CD8-positive, alpha-beta T cell (primary cell): ENCODE measurements at regions of chr10 and their contacts with region 1.

Region 1: GRCh38 chr10:96532496-96532895 is 18.8 kb upstream of the TLL2 start:
- DNase-seq: no peak
- ATAC-seq: no peak
- H3K4me3 ChIP-seq: no peak overlapping the region
- H3K4me3 Mint-ChIP-seq: no peak overlapping the region
- H3K27ac ChIP-seq: no peak overlapping the region
- H3K27ac Mint-ChIP-seq: no peak overlapping the region
- H3K4me1 ChIP-seq: no peaks in the 10 kb centered on the region
- H3K4me1 Mint-ChIP-seq: peaks cover 7% of the 10 kb centered on the region
- H3K27me3 ChIP-seq: no peaks in the 10 kb centered on the region
- H3K27me3 Mint-ChIP-seq: no peaks in the 10 kb centered on the region
- CTCF ChIP-seq: no peak

Region 2: GRCh38 chr10:95741807-95742467 is 790.6 kb before region 1 on chr10:
- CTCF ChIA-PET with region 1: no interaction called
- POLR2A ChIA-PET with region 1: no interaction called
- intact Hi-C with region 1: no loop called
- DNase-seq: no peak
- ATAC-seq: no peak
- H3K4me3 ChIP-seq: no peak overlapping the region
- H3K4me3 Mint-ChIP-seq: no peak overlapping the region
- H3K27ac ChIP-seq: no peak overlapping the region
- H3K27ac Mint-ChIP-seq: no peak overlapping the region
- H3K4me1 ChIP-seq: no peaks in the 10 kb centered on the region
- H3K4me1 Mint-ChIP-seq: no peaks in the 10 kb centered on the region
- H3K27me3 ChIP-seq: no peaks in the 10 kb centered on the region
- H3K27me3 Mint-ChIP-seq: peaks cover 14% of the 10 kb centered on the region
- CTCF ChIP-seq: no peak

Region 3: DNA sequence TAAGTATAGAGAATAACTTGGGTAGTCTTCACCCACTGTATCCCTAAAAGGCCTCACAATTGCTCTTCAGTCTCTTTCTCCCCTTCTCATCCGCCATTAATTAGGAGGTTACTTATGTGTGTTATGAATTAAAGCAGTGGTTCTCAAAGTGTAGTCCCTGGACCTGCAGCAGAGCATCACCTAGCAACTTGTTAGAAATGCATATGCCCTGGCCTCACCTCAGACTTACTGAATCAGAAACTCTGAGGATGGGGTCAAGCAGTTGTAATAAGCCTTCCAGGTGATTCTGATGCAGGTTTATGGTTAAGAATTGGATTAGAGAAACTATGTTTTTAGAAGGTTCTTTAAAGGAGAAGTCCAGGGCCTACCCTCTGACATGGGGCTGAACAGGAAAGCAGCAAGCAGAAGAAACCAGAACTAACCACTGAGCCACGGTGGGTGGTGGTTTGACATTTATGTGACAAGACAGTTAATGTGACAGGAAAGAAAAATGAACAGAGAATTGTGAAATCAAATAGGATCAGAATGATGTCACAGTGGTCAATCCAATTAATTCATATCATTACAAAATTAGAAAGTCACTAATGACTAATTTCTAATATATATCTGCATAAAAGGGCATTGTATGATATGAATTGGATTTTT is 739.0 kb before region 1 on chr10:
- CTCF ChIA-PET with region 1: no interaction called
- POLR2A ChIA-PET with region 1: no interaction called
- intact Hi-C with region 1: no loop called
- DNase-seq: peak in 1 of 9 experiments; percentile 45
- ATAC-seq: no peak
- H3K4me3 ChIP-seq: no peak overlapping the region
- H3K4me3 Mint-ChIP-seq: no peak overlapping the region
- H3K27ac ChIP-seq: no peak overlapping the region
- H3K27ac Mint-ChIP-seq: no peak overlapping the region
- H3K4me1 ChIP-seq: no peaks in the 10 kb centered on the region
- H3K4me1 Mint-ChIP-seq: no peaks in the 10 kb centered on the region
- H3K27me3 ChIP-seq: no peaks in the 10 kb centered on the region
- H3K27me3 Mint-ChIP-seq: peaks cover 5% of the 10 kb centered on the region
- CTCF ChIP-seq: no peak

Region 4: DNA sequence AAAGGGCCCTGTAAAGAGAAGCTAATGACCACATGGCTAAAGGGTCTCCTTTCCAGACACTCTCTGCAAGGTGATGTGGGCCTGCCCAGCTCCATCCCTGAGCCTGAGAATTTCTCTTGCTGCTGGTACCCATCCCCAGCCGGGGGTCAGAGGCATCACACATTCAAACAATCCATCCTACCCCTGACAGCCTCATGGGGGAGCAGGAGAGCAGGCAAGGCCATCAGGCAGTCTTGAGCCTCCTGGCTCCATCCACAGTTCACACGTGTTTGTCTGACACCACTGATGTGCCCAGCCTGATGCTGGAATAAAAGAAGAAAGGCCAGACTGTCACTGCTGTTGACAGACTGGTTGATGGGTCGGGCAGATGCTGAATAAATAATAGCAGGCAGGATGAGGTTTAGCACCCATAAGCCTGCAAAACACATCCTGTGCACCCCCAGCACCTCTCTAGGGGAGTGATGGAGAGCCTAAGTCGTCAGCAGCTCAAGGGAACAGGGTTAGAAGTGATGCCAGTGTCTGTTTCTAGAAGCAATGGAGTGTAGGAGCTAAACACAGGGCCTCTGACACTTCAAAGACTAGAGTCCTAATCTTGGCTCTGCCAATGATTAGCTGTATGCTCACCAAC is 62.3 kb before region 1 on chr10:
- CTCF ChIA-PET with region 1: no interaction called
- POLR2A ChIA-PET with region 1: no interaction called
- intact Hi-C with region 1: no loop called
- DNase-seq: peak in 3 of 9 experiments; percentile 16 to 47 (median 28)
- ATAC-seq: peak; percentile 46
- H3K4me3 ChIP-seq: no peak overlapping the region
- H3K4me3 Mint-ChIP-seq: no peak overlapping the region
- H3K27ac ChIP-seq: no peak overlapping the region
- H3K27ac Mint-ChIP-seq: no peak overlapping the region
- H3K4me1 ChIP-seq: no peaks in the 10 kb centered on the region
- H3K4me1 Mint-ChIP-seq: no peaks in the 10 kb centered on the region
- H3K27me3 ChIP-seq: no peaks in the 10 kb centered on the region
- H3K27me3 Mint-ChIP-seq: peaks cover 20% of the 10 kb centered on the region
- CTCF ChIP-seq: no peak

Region 5: GRCh38 chr10:96496281-96496925 is 36.1 kb before region 1 on chr10:
- CTCF ChIA-PET with region 1: no interaction called
- POLR2A ChIA-PET with region 1: no interaction called
- intact Hi-C with region 1: loop called in 1 of 2 experiments (anchors 1 kb)
- DNase-seq: no peak
- ATAC-seq: no peak
- H3K4me3 ChIP-seq: no peak overlapping the region
- H3K4me3 Mint-ChIP-seq: no peak overlapping the region
- H3K27ac ChIP-seq: no peak overlapping the region
- H3K27ac Mint-ChIP-seq: no peak overlapping the region
- H3K4me1 ChIP-seq: no peaks in the 10 kb centered on the region
- H3K4me1 Mint-ChIP-seq: no peaks in the 10 kb centered on the region
- H3K27me3 ChIP-seq: no peaks in the 10 kb centered on the region
- H3K27me3 Mint-ChIP-seq: peaks cover 20% of the 10 kb centered on the region
- CTCF ChIP-seq: no peak

Region 6: DNA sequence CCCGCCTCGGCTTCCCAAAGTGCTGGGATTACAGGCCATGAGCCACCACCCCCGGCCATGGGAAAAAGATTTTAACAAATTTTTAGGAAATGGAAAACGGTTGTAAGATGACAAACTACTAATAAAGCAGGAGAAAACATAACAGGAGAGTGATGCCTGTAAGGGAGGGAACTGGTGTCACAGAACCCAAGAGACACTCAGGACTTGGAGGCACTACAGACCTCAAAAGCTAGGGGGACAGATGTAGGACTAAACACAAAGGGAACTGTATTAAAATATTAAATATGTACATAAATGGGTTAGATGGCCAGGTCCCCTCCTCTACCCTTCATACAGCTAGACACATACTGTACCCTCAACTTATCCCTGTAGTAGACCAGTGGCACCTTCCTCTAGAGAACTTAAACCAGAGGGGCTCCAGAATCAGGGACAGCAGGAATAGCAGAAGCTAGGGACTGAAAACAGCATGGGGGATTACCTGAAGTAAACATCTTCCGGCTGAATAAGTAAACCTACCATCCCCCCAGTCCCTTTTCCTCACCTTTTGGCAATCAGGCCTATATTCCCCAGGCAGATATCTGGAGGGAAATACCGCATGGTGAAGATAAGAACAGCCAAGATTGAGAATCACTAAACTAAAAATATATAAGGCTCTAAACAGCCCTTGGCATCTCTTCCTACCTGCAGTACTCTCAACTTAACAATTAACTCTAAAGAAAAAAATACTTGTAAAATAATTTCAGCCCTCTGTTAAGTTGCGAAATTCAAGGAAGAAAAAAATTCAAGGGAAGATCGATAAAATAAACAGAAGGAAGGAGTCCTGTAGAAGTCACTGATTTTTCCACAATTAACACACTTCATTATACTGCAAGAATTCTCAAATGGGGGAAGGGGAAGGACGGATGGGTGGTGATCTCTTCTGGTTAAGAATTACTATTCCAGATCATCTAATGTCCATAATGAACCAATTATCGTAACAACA is 38.8 kb after region 1 on chr10:
- CTCF ChIA-PET with region 1: no interaction called
- POLR2A ChIA-PET with region 1: no interaction called
- intact Hi-C with region 1: no loop called
- DNase-seq: no peak
- ATAC-seq: no peak
- H3K4me3 ChIP-seq: no peak overlapping the region
- H3K4me3 Mint-ChIP-seq: no peak overlapping the region
- H3K27ac ChIP-seq: no peak overlapping the region
- H3K27ac Mint-ChIP-seq: no peak overlapping the region
- H3K4me1 ChIP-seq: peaks cover 5% of the 10 kb centered on the region
- H3K4me1 Mint-ChIP-seq: peaks cover 76% of the 10 kb centered on the region
- H3K27me3 ChIP-seq: no peaks in the 10 kb centered on the region
- H3K27me3 Mint-ChIP-seq: no peaks in the 10 kb centered on the region
- CTCF ChIP-seq: no peak